ENCODE measurements at regions of chr10 and their contacts with region 1.

Region 1: GRCh38 chr10:76251841-76252671 is 820.6 kb downstream of the LRMDA start:
- DNase-seq: peak; percentile 70

Region 2: DNA sequence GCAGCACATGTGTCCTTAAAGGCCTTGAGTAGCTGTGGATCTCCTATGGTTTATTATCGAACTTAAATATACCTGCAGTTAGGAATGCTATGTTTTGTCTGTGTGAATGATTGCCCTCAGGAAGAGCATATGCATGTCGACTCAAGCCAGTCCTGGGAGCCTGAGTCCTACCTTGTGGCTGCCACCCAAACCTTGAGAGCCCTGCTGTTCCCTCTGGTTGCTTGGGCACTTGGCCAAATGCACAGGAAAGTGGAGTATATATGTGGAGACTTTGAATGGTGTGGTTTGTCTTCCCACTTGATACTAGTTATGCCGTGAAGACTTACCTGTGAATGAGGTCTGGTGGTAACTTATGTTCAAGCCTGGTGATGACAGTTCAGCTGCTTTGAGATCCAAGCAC is 410.8 kb before region 1 on chr10:
- CTCF ChIA-PET with region 1: no interaction called
- POLR2A ChIA-PET with region 1: no interaction called
- DNase-seq: no peak

Region 3: GRCh38 chr10:76113959-76114358 is 138.1 kb before region 1 on chr10:
- CTCF ChIA-PET with region 1: no interaction called
- POLR2A ChIA-PET with region 1: interaction called, 10 read pairs
- DNase-seq: peak; percentile 39

Region 4: DNA sequence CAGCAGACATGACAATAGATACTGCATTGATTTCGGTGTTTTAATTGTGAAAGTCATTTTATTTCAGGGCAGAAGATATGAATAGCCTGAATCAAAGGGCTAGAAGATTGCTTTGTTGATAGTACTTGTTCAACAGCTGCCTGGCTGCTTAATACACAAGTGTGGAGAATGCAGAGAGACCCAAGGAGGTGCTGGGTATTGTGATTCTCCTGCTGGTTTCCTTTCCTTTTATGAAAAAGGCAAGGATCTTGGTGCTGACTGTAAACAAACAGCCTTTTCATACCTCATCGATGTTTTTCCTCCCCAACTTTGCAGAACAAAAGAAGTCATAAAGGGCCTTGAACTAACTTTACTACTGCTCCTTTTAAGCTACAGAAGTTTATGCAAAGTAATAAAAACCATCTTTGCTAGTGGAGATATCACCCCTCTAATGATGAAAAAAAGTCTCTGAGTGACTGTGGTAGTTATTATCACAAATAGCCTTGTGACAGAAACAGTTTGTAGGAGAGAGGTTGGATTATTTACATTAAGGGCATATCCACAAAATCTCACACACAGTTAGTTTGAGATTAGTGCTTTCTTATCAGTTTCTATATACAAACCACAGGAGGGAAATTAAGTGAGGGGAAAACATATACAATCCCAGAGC is 20.6 kb before region 1 on chr10:
- CTCF ChIA-PET with region 1: no interaction called
- POLR2A ChIA-PET with region 1: no interaction called
- DNase-seq: peak; percentile 21

Region 5: DNA sequence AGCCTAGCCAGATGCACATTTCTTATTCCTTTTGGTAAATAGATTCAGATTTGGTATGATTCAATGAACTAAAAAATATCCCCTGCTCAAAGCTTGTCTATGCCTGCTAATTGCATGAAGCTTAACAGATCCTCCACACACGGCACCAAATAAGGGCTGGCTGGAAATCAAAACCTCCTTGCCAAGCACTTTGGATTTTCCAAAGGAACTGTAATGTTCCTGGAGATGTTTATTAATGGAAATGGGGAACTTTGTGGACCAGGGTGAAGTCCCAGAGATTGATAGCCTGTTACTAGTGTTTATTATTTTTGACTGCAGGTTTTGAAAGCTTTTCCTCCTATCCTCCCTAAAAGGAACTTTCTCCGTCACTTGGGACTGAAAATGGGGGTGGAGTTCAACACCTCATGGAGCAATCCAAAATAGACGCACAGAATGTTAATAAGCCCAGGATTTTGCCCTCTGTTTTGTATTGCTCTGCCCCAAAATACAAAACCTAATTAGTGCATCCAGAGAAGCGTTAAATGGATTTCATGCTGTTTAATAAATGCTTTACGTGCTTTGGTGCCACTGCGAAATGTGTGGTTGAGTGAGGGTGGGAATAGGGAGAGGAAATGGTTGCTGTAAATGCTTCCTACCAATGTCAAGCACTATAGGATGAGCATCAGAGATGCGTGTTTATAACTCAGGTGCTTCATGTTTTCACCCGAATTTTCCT is 207.1 kb after region 1 on chr10:
- CTCF ChIA-PET with region 1: no interaction called
- POLR2A ChIA-PET with region 1: no interaction called
- DNase-seq: no peak